H1 (cell line): ENCODE measurements at regions of chr6 and their contacts with region 1.

Region 1: GRCh38 chr6:42095785-42096541 is 45.6 kb downstream of the TAF8 start:
- DNase-seq: peak in 1 of 2 experiments; percentile 64
- H3K4me3 ChIP-seq: no peak overlapping the region
- H3K27ac ChIP-seq: no peak overlapping the region
- H3K4me1 ChIP-seq: peaks cover 0 to 7% (median 5%) of the 10 kb centered on the region in 4 experiments; a peak in 4 of 7 replicates
- H3K27me3 ChIP-seq: peaks cover 0 to 41% (median 37%) of the 10 kb centered on the region in 4 experiments; a peak in 6 of 7 replicates
- CTCF ChIP-seq: peak; percentile 22 to 48 (median 48)
- EP300 ChIP-seq: no peak
- POLR2A ChIP-seq: no peak; a peak in 1 of 3 replicates
- RAD21 ChIP-seq: peak; percentile 36 to 46; a peak in 2 of 4 replicates

Region 2: GRCh38 chr6:41996997-41997396 is 99.0 kb before region 1 on chr6:
- CTCF ChIA-PET with region 1: no interaction called
- POLR2A ChIA-PET with region 1: no interaction called
- DNase-seq: no peak
- H3K4me3 ChIP-seq: no peak overlapping the region
- H3K27ac ChIP-seq: no peak overlapping the region
- H3K4me1 ChIP-seq: no peaks in the 10 kb centered on the region
- H3K27me3 ChIP-seq: no peaks in the 10 kb centered on the region
- CTCF ChIP-seq: no peak
- EP300 ChIP-seq: no peak
- POLR2A ChIP-seq: no peak
- RAD21 ChIP-seq: no peak

Region 3: DNA sequence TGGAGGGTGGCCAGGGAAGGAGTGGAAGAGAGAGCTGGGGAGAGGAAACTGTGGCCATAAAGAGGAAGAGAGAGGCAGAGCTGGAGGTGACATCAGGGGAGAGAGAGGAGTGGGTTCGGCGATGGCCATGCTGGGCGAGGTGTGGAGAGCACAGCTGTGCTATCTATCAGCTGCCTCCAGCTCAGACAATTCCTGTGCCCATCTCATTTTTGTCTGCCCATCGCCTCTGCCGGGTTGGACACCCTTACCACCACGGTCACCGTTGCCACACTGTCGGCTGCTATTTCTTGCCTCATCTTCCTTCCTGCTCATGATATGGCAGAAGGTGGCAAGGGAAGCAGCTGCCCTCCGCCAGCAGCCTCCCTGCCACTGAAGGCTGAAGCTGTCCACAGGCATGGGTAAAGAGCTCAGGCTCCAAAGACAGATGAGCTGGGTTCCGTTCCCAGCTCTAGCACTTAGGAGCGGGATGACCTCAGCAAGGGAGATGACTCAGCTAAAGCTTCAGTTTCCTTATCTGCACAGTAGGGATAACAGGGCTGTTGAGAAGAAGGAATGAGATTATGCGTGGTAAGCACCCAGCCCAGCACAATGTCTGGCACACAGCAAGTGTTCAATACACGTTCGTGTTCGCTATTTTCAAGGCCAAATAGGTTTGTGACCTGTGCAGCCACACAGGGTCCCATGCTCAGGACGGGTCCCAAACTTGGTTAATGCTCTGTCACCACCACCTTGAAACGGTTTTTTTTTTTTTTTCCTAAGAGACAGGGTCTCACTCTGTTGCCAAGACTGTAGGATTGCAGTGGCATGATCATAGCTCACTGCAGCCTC is 67.5 kb before region 1 on chr6:
- CTCF ChIA-PET with region 1: no interaction called
- POLR2A ChIA-PET with region 1: no interaction called
- DNase-seq: no peak
- H3K4me3 ChIP-seq: no peak overlapping the region
- H3K27ac ChIP-seq: no peak overlapping the region
- H3K4me1 ChIP-seq: peaks cover 4 to 8% (median 7%) of the 10 kb centered on the region in 4 experiments; a peak in 5 of 7 replicates
- H3K27me3 ChIP-seq: peaks cover 0 to 2% (median 0%) of the 10 kb centered on the region in 4 experiments; a peak in 1 of 7 replicates
- CTCF ChIP-seq: no peak
- EP300 ChIP-seq: no peak
- POLR2A ChIP-seq: no peak
- RAD21 ChIP-seq: no peak

Region 4: GRCh38 chr6:42118162-42119001 is 22.4 kb after region 1 on chr6:
- CTCF ChIA-PET with region 1: interaction called, 24 read pairs
- POLR2A ChIA-PET with region 1: interaction called, 4 read pairs
- DNase-seq: no peak
- H3K4me3 ChIP-seq: no peak overlapping the region
- H3K27ac ChIP-seq: no peak overlapping the region
- H3K4me1 ChIP-seq: no peaks in the 10 kb centered on the region; a peak in 1 of 7 replicates
- H3K27me3 ChIP-seq: no peaks in the 10 kb centered on the region
- CTCF ChIP-seq: no peak
- EP300 ChIP-seq: no peak
- POLR2A ChIP-seq: peak in 1 of 2 experiments; percentile 31; a peak in 1 of 3 replicates
- RAD21 ChIP-seq: no peak

Region 5: GRCh38 chr6:42158011-42158410 is 62.0 kb after region 1 on chr6:
- CTCF ChIA-PET with region 1: interaction called, 224 read pairs
- POLR2A ChIA-PET with region 1: interaction called, 6 read pairs
- DNase-seq: no peak
- H3K4me3 ChIP-seq: no peak overlapping the region
- H3K27ac ChIP-seq: no peak overlapping the region
- H3K4me1 ChIP-seq: peaks cover 0 to 14% (median 8%) of the 10 kb centered on the region in 4 experiments
- H3K27me3 ChIP-seq: peaks cover 0 to 3% (median 0%) of the 10 kb centered on the region in 4 experiments; a peak in 3 of 7 replicates
- CTCF ChIP-seq: no peak
- EP300 ChIP-seq: no peak
- POLR2A ChIP-seq: no peak
- RAD21 ChIP-seq: no peak

Region 6: DNA sequence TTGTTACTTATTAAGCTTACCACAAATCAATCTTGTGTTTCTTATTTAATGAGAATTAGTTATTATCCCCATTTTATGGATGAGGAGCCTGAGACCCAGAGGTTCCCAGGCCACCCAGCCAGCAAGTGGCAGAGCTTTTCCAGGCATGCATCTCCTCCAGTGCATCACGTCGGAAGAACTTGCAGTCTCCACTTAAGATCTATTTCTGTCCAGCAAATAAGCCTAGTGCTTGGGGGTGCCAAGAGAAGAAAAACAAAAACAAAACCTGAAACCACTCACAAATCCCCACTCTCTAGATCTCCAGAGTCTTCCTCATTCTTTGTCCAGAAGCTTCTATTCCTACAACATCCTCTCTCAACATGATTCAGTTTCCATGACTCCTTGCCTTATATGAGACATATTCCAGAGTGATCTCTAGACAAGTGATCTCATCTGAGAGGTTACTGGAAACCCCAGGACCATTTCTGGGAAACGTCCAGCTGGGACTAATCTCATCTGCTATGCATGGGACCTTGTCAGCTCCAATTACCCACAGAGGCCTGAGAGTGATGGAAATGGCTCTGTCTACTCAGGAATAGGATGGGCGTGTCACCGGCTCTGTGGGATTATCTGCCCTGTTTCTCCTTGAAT is 94.7 kb after region 1 on chr6:
- CTCF ChIA-PET with region 1: interaction called, 11 read pairs
- POLR2A ChIA-PET with region 1: interaction called, 4 read pairs
- DNase-seq: no peak
- H3K4me3 ChIP-seq: no peak overlapping the region
- H3K27ac ChIP-seq: no peak overlapping the region
- H3K4me1 ChIP-seq: peaks cover 2 to 6% (median 4%) of the 10 kb centered on the region in 4 experiments
- H3K27me3 ChIP-seq: peaks cover 0 to 3% (median 0%) of the 10 kb centered on the region in 4 experiments; a peak in 1 of 7 replicates
- CTCF ChIP-seq: no peak
- EP300 ChIP-seq: no peak
- POLR2A ChIP-seq: no peak
- RAD21 ChIP-seq: no peak